HCT116 (cell line): ENCODE measurements at regions of chr4 and their contacts with region 1.

Region 1: DNA sequence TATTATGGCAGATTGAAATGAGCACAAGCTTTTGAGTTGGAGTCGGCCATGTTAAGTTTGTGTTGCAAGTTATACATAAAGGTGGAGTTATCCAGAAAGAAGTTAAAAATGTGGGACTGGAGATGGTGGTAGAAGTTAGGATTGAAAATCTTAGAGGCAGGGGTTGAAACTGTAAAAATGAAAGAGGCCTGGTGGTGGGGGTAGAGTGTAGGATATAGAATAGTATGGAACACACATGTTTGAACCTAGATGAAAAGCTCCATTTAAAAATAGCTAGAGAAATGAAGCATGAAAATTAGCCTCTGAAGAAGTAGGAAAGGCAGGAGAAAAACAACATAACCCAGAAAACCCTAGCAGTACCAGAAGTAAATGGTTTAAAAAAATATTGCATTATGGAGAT is 131.8 kb upstream of the ENPEP start:
- DNase-seq: peak; percentile 3
- ATAC-seq: peak; percentile 72
- H3K4me3 ChIP-seq: no peak overlapping the region
- H3K27ac ChIP-seq: no peak overlapping the region
- H3K4me1 ChIP-seq: no peaks in the 10 kb centered on the region
- H3K27me3 ChIP-seq: no peaks in the 10 kb centered on the region
- CTCF ChIP-seq: peak; percentile 37 to 50 (median 50); a peak in 5 of 6 replicates
- POLR2A ChIP-seq: no peak
- RAD21 ChIP-seq: peak; percentile 66

Region 2: DNA sequence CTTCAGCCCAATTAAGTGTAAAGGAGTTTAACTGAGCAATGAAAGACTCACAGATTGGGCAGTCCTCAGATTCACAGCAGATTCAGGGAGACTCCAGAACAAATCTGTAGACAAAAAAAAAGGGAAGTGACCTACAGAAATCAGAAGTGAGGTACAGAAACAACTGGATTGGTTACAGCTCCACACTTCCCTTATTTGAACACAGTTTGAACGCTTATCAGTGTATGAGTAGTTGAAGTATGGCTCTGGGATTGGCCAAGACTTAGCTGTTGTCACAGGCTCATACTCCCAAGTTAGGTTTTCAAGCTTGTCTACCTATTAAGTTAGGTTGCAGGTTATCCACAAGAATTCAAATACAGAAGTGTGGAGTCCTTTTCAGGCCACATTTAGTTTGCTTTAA is 33.4 kb before region 1 on chr4:
- CTCF ChIA-PET with region 1: interaction called, 12 read pairs
- POLR2A ChIA-PET with region 1: no interaction called
- RAD21 ChIA-PET with region 1: no interaction called
- intact Hi-C with region 1: no loop called
- DNase-seq: no peak
- ATAC-seq: peak; percentile 53; the same call in 1 of the 2 replicates
- H3K4me3 ChIP-seq: no peak overlapping the region
- H3K27ac ChIP-seq: no peak overlapping the region
- H3K4me1 ChIP-seq: no peaks in the 10 kb centered on the region
- H3K27me3 ChIP-seq: no peaks in the 10 kb centered on the region
- CTCF ChIP-seq: no peak
- POLR2A ChIP-seq: no peak
- RAD21 ChIP-seq: no peak

Region 3: GRCh38 chr4:110510955-110511544 is 166.9 kb after region 1 on chr4:
- CTCF ChIA-PET with region 1: interaction called, 167 read pairs
- POLR2A ChIA-PET with region 1: interaction called, 3 read pairs
- RAD21 ChIA-PET with region 1: interaction called, 5 to 9 read pairs
- intact Hi-C with region 1: loop called (anchors 1 kb)
- DNase-seq: peak; percentile 56
- ATAC-seq: peak; percentile 69
- H3K4me3 ChIP-seq: no peak overlapping the region
- H3K27ac ChIP-seq: no peak overlapping the region
- H3K4me1 ChIP-seq: peaks cover 0 to 9% of the 10 kb centered on the region in 2 experiments; a peak in 1 of 4 replicates
- H3K27me3 ChIP-seq: no peaks in the 10 kb centered on the region
- CTCF ChIP-seq: peak; percentile 52 to 73 (median 62); a peak in 4 of 6 replicates
- POLR2A ChIP-seq: no peak
- RAD21 ChIP-seq: peak; percentile 74

Region 4: GRCh38 chr4:110516106-110516922 is 172.2 kb after region 1 on chr4:
- CTCF ChIA-PET with region 1: interaction called, 167 read pairs
- POLR2A ChIA-PET with region 1: no interaction called
- RAD21 ChIA-PET with region 1: interaction called, 3 to 5 read pairs
- intact Hi-C with region 1: loop called (anchors 1 kb)
- DNase-seq: peak; percentile 72
- ATAC-seq: peak; percentile 98
- H3K4me3 ChIP-seq: peak overlapping the region; percentile 33 to 53
- H3K27ac ChIP-seq: no peak overlapping the region
- H3K4me1 ChIP-seq: peaks cover 0 to 9% of the 10 kb centered on the region in 2 experiments; a peak in 1 of 4 replicates
- H3K27me3 ChIP-seq: no peaks in the 10 kb centered on the region
- CTCF ChIP-seq: peak; percentile 73 to 84 (median 79)
- POLR2A ChIP-seq: no peak
- RAD21 ChIP-seq: peak; percentile 61

Region 5: GRCh38 chr4:110586131-110586850 is 242.1 kb after region 1 on chr4:
- CTCF ChIA-PET with region 1: interaction called, 11 read pairs
- POLR2A ChIA-PET with region 1: no interaction called
- RAD21 ChIA-PET with region 1: no interaction called
- intact Hi-C with region 1: loop called (anchors 5 kb)
- DNase-seq: peak; percentile 31
- ATAC-seq: peak; percentile 86
- H3K4me3 ChIP-seq: no peak overlapping the region
- H3K27ac ChIP-seq: no peak overlapping the region
- H3K4me1 ChIP-seq: no peaks in the 10 kb centered on the region
- H3K27me3 ChIP-seq: no peaks in the 10 kb centered on the region
- CTCF ChIP-seq: peak; percentile 57 to 64 (median 57); a peak in 5 of 6 replicates
- POLR2A ChIP-seq: no peak
- RAD21 ChIP-seq: peak; percentile 65